ENCODE measurements at regions of chr5 and their contacts with region 1.

Region 1: GRCh38 chr5:7886849-7887475 is 18.0 kb downstream of the MTRR start:
- DNase-seq: peak in 1 of 5 donors; percentile 31
- H3K4me3 ChIP-seq: no peak overlapping the region
- H3K4me3 Mint-ChIP-seq: no peak overlapping the region
- H3K27ac ChIP-seq: no peak overlapping the region
- H3K27ac Mint-ChIP-seq: peak overlapping the region in 1 of 8 donors; percentile 36
- H3K4me1 ChIP-seq: no peaks in the 10 kb centered on the region
- H3K4me1 Mint-ChIP-seq: peaks cover 7 to 10% (median 10%) of the 10 kb centered on the region in 3 donors
- H3K27me3 ChIP-seq: no peaks in the 10 kb centered on the region
- H3K27me3 Mint-ChIP-seq: no peaks in the 10 kb centered on the region

Region 2: GRCh38 chr5:7242118-7242710 is 644.7 kb before region 1 on chr5:
- CTCF ChIA-PET with region 1: no interaction called
- POLR2A ChIA-PET with region 1: no interaction called
- DNase-seq: no peak
- H3K4me3 ChIP-seq: no peak overlapping the region
- H3K4me3 Mint-ChIP-seq: no peak overlapping the region
- H3K27ac ChIP-seq: no peak overlapping the region
- H3K27ac Mint-ChIP-seq: no peak overlapping the region
- H3K4me1 ChIP-seq: no peaks in the 10 kb centered on the region
- H3K4me1 Mint-ChIP-seq: no peaks in the 10 kb centered on the region
- H3K27me3 ChIP-seq: no peaks in the 10 kb centered on the region
- H3K27me3 Mint-ChIP-seq: peaks cover 3% of the 10 kb centered on the region in 2 donors

Region 3: DNA sequence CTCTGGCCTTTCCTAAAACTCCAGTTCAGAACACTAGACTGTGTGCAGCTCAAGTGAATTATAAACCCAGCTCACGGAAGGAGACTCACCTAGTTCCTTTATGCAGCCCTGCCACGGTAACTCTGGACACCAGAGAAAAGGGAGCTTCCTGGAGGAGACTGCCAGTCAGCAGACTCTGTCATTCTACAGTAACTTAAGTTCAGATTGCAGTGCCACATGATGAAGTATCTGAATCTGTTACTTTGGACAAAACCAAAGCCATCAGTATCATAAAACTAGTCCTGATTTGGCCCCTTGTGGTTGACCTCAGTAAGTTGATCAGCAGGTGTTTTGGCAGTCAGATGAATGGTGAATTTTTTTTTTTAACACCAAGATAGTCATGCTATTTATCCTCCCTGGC is 15.3 kb before region 1 on chr5:
- CTCF ChIA-PET with region 1: interaction called, 10 read pairs
- POLR2A ChIA-PET with region 1: interaction called, 3 read pairs
- DNase-seq: no peak
- H3K4me3 ChIP-seq: no peak overlapping the region
- H3K4me3 Mint-ChIP-seq: peak overlapping the region; percentile 72 to 96 (median 92)
- H3K27ac ChIP-seq: no peak overlapping the region
- H3K27ac Mint-ChIP-seq: peak overlapping the region; percentile 81 to 95 (median 86)
- H3K4me1 ChIP-seq: peaks cover 57% of the 10 kb centered on the region
- H3K4me1 Mint-ChIP-seq: peaks cover 75 to 90% (median 90%) of the 10 kb centered on the region in 3 donors
- H3K27me3 ChIP-seq: no peaks in the 10 kb centered on the region
- H3K27me3 Mint-ChIP-seq: peaks cover 0 to 3% of the 10 kb centered on the region in 2 donors

Region 4: GRCh38 chr5:7902201-7902600 is 15.2 kb after region 1 on chr5:
- CTCF ChIA-PET with region 1: interaction called, 10 read pairs
- POLR2A ChIA-PET with region 1: no interaction called
- DNase-seq: no peak
- H3K4me3 ChIP-seq: no peak overlapping the region
- H3K4me3 Mint-ChIP-seq: no peak overlapping the region
- H3K27ac ChIP-seq: no peak overlapping the region
- H3K27ac Mint-ChIP-seq: no peak overlapping the region
- H3K4me1 ChIP-seq: no peaks in the 10 kb centered on the region
- H3K4me1 Mint-ChIP-seq: peaks cover 0 to 2% (median 0%) of the 10 kb centered on the region in 3 donors
- H3K27me3 ChIP-seq: no peaks in the 10 kb centered on the region
- H3K27me3 Mint-ChIP-seq: no peaks in the 10 kb centered on the region